Esophagus squamous epithelium (tissue), 5 donors: ENCODE measurements at regions of chr22 and their contacts with region 1.

Region 1: DNA sequence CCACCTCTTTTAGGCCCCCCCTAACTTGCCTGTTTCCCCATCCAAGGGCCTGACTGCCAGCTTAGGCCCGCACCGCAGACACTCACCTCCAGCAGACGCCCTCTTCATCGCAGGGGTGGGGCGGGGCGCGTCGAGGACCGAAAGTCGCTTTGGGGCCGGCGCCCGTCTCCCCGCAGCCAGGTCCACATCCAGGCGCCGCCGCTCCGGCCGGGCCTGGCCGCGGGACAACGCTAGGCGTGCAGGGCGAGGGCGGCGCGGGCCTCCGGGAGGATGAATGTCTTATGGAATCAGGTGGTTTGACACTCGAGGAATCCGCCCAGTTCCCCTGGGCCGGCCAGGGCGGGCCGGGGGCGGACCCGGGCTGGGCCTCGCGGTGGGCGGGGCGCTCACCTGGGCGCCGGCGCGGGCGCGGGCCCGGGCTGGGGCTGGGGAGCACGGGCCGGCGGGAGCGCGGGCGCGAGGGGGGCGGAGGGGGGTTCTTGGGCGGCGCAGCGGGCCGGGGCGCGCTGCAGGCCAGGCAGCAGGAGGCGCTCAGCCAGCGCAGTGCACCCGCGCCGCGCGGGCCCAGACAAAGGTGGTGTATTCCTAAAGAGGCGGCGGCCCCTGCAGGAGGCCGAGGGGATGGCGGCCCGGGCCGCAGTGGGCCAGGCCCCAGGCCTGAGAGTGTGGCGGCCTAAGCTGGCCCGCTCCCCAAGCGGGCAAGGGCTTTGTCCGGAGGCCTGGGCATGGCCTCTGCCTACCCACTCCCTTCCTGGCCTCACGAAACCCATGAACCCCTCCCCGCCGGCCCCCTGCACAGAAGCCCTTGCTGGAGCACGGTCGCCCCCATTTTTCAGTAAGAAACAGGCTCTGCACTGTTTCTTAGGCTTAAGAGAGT is 177.6 kb downstream of the IGLL1 start:
- DNase-seq: no peak
- H3K4me3 ChIP-seq: peak overlapping the region; percentile 12 to 59 (median 37)
- H3K27ac ChIP-seq: no peak overlapping the region
- H3K4me1 ChIP-seq: peaks cover 0 to 12% (median 0%) of the 10 kb centered on the region in 3 donors
- H3K27me3 ChIP-seq: peaks cover 0 to 30% (median 0%) of the 10 kb centered on the region in 4 donors
- CTCF ChIP-seq: peak in 5 of 6 experiments; percentile 35 to 66 (median 39)
- POLR2A ChIP-seq: no peak

Region 2: GRCh38 chr22:22999523-22999922 is 403.0 kb before region 1 on chr22:
- intact Hi-C with region 1: no loop called
- DNase-seq: no peak
- H3K4me3 ChIP-seq: no peak overlapping the region
- H3K27ac ChIP-seq: no peak overlapping the region
- H3K4me1 ChIP-seq: no peaks in the 10 kb centered on the region
- H3K27me3 ChIP-seq: peaks cover 0 to 21% (median 0%) of the 10 kb centered on the region in 4 donors
- CTCF ChIP-seq: no peak
- POLR2A ChIP-seq: no peak

Region 3: GRCh38 chr22:23539135-23539838 is 136.8 kb after region 1 on chr22:
- intact Hi-C with region 1: loop called (anchors 5 kb)
- DNase-seq: peak; percentile 20
- H3K4me3 ChIP-seq: no peak overlapping the region
- H3K27ac ChIP-seq: no peak overlapping the region
- H3K4me1 ChIP-seq: peaks cover 0 to 21% (median 0%) of the 10 kb centered on the region in 3 donors
- H3K27me3 ChIP-seq: peaks cover 0 to 52% (median 0%) of the 10 kb centered on the region in 4 donors
- CTCF ChIP-seq: peak; percentile 78 to 96 (median 93)
- POLR2A ChIP-seq: no peak